SK-N-SH (cell line): ENCODE measurements at regions of chr17 and their contacts with region 1.

Region 1: DNA sequence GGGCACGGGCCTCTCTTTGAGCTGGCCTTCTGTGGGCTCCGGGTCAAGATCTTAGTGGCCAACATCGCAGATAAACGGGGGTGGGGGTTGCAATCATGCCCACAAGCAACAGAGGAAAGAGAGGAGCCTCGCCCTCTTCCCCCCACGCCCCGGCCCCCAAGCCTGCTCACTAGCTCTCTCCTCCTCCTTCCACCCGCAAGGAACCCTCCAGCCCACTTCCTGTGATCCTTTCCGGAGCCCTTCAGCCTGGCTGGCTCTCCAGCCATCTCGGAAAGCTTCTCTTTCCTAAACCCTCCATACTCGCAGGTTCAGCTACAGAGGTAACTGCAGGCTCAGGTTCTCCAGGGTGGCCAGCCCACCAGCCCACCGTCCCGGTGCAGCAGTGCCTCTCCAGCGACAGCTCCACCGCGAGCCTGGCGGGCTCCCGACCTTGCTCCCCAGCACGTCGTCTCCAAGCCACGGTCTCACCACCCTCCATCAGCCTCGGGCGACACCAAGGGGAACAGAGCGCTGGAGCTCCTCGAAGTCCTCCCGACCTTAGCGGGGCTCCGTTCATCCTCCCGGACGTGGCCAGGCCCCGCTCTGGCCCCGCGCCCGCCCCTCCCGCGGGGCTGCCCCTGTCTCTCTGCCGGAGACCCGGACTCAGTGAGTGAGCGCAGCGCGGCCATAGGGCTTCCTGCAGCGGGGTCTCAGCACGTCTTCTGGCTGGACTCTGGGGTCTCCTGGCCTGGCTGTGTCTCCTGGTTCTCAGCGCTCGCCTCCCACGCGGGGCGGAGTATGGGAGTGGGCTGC is 12.9 kb upstream of the ODF4 start:
- DNase-seq: peak; percentile 79
- H3K4me3 ChIP-seq: peak overlapping the region in 1 of 2 experiments; percentile 24; a peak in 1 of 4 replicates
- H3K27ac ChIP-seq: no peak overlapping the region
- H3K4me1 ChIP-seq: peaks cover 0 to 6% of the 10 kb centered on the region in 2 experiments; a peak in 1 of 4 replicates
- H3K27me3 ChIP-seq: no peaks in the 10 kb centered on the region
- CTCF ChIP-seq: no peak
- EP300 ChIP-seq: no peak
- RAD21 ChIP-seq: no peak

Region 2: GRCh38 chr17:8337802-8338752 is 11.4 kb after region 1 on chr17:
- CTCF ChIA-PET with region 1: interaction called, 16 read pairs
- POLR2A ChIA-PET with region 1: no interaction called
- DNase-seq: no peak
- H3K4me3 ChIP-seq: no peak overlapping the region
- H3K27ac ChIP-seq: no peak overlapping the region
- H3K4me1 ChIP-seq: no peaks in the 10 kb centered on the region
- H3K27me3 ChIP-seq: no peaks in the 10 kb centered on the region
- CTCF ChIP-seq: no peak
- EP300 ChIP-seq: no peak
- RAD21 ChIP-seq: no peak